ENCODE measurements at regions of chr3 and their contacts with region 1.

Region 1: DNA sequence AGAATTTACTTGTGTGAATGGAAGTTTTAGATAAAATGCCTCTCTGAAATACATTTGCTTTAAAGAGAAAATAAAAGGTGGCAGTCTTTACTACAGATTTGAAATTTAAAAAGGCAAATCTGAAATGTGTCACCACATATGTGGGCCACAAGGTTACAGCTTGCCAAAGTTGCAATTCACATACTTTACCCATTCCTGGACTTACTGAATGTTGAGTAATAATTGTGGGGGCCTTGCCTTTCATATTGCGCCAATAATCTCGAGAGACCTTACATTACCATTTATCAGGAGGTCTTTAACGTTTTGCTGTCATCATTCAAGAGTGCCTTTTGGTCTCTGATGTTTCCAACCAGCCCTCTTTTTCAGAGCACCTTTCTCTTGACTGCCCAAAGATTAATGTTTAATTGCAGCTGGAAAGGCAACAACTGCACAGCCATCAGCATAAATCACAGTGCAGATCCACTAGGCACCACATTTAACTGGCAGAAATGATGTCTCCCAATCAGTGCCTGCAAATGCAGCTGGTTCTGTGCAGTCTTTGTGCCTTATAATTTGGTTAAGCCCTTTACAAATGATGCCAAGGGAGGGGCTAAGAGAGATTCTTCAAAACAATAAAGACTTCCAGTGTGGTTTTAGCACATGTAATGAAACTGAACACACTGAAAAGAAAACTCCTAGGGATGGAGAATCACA is 206.8 kb downstream of the MAGI1 start:
- DNase-seq: peak; percentile 55
- H3K4me3 ChIP-seq: no peak overlapping the region
- CTCF ChIP-seq: no peak

Region 2: DNA sequence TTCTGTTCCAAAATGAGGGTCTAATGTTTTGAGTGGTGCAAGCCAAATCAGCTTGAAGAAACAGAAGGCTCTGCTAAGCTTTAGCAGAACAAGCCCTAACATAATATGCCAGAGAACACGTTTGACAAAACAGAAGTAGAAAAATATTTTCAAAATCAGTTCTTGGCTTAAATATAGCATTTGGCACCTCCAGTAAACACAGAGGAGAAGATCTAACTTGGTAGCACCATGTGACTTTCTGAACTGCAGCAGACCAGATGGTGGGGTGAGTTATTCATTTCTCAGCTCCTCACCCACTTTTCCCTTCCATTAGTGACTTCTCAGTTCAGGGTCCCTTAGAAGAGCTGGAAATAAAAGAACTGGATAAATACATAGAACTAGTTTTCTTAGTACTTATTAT is 189.0 kb before region 1 on chr3:
- CTCF ChIA-PET with region 1: no interaction called
- POLR2A ChIA-PET with region 1: no interaction called
- DNase-seq: no peak
- H3K4me3 ChIP-seq: no peak overlapping the region
- CTCF ChIP-seq: no peak

Region 3: DNA sequence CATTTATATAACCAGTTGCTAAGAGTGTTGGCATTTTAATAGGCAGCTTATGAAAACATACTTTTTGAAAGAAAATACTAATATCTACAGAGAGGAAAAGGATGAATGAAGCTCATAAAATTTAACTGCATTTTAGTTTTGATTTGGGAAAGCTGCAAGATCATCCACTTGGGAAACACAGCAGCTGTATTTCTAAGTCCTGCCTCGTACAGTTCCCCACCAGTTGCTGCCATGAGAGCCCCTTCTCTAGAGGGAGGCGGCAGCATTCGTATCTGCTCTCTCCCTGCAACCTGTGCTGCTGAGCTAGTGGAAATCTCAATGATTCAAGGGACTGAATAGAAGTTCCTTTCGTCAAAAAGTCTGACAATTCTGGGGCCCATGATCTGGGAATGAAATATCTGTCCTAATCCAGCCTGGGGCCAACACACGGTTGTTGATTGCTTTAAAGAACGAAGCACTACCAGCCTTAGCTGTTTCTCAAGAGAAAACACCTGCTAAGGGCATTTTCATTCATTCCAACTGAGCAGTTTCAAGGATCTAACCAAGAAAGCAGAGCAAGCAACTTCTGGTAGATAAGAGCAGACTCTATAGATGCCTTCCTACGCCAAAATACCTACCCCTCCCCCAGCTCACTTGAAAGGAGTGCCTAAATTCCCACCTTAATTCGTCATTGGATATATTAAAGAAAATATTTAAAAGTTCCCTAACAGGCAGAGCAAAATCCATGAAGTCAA is 16.9 kb before region 1 on chr3:
- CTCF ChIA-PET with region 1: interaction called, 10 read pairs
- POLR2A ChIA-PET with region 1: interaction called, 8 read pairs
- DNase-seq: no peak
- H3K4me3 ChIP-seq: no peak overlapping the region
- CTCF ChIP-seq: no peak

Region 4: GRCh38 chr3:65848024-65848423 is 16.1 kb after region 1 on chr3:
- CTCF ChIA-PET with region 1: interaction called, 17 read pairs
- POLR2A ChIA-PET with region 1: no interaction called
- DNase-seq: no peak
- H3K4me3 ChIP-seq: no peak overlapping the region
- CTCF ChIP-seq: no peak

Measured in AG04449 (cell line).